ENCODE measurements at regions of chr11 and their contacts with region 1.

Region 1: GRCh38 chr11:119409731-119410130 is 13.2 kb downstream of the THY1 start:
- DNase-seq: no peak
- ATAC-seq: no peak
- H3K4me3 ChIP-seq: no peak overlapping the region
- H3K27ac ChIP-seq: no peak overlapping the region
- H3K4me1 ChIP-seq: no peaks in the 10 kb centered on the region; the same call in 1 of the 2 replicates
- H3K27me3 ChIP-seq: no peaks in the 10 kb centered on the region
- CTCF ChIP-seq: no peak

Region 2: GRCh38 chr11:119474682-119475596 is 65.2 kb after region 1 on chr11:
- CTCF ChIA-PET with region 1: interaction called, 12 read pairs
- POLR2A ChIA-PET with region 1: interaction called, 9 read pairs
- in situ Hi-C with region 1: no loop called
- intact Hi-C with region 1: no loop called
- DNase-seq: peak; percentile 58
- ATAC-seq: peak; percentile 85
- H3K4me3 ChIP-seq: no peak overlapping the region
- H3K27ac ChIP-seq: no peak overlapping the region
- H3K4me1 ChIP-seq: no peaks in the 10 kb centered on the region
- H3K27me3 ChIP-seq: no peaks in the 10 kb centered on the region
- CTCF ChIP-seq: peak; percentile 98

Region 3: DNA sequence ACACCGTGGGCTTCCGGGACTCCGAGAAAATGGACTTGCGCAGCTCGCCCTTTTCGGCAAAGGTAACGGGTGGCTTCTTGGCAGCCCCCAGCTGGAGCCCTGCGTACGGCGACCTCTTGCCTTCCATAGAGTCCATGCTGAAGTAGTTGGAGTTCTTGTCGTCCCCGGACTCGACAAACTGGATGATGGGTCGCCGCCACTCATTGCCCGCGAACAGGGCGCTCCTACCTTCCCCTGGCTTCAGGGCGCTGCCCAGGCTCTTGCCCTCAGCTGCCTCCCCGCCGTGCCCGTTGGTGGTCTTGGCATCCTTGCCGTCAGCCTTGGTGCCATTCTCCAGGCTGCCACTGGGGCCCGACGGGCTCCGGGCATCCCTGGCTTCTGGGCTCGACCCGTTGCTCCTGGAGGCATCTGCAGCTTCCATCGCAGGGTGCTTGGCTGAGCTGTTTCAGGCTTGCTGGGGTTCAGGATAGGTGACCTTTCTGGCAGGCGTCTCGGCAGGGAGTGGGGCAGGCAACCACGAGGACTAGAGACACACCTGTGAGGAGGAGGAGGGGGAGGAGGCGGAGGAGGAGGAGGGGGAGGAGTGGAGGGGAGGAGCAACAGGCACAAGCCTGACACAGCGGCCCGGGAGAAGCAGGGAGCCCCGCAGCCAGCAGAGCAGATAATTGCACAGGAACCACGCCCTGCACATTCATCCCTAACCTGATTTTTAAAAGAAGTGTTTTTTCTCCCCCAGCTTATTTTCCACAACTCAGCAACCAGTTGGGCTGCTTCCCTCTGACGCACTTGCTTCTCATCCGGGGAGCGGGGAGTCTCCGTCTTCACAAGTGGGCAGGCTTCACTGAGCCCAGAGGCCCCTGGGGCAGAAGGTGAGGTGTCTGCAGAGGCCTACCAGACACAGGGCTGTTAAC is 728.1 kb after region 1 on chr11 and contains the start of gene TRIM29:
- CTCF ChIA-PET with region 1: no interaction called
- POLR2A ChIA-PET with region 1: no interaction called
- in situ Hi-C with region 1: no loop called
- intact Hi-C with region 1: no loop called
- DNase-seq: no peak
- ATAC-seq: no peak
- H3K4me3 ChIP-seq: no peak within 1 kb of the TSS
- H3K27ac ChIP-seq: no peak within 1 kb of the TSS
- H3K4me1 ChIP-seq: no peaks in the 10 kb centered on the region
- H3K27me3 ChIP-seq: peaks cover 16% of the 10 kb centered on the region
- CTCF ChIP-seq: no peak
- total RNA-seq, gene TRIM29: 0.64 TPM